ENCODE measurements at regions of chr5 and their contacts with region 1.

Region 1: DNA sequence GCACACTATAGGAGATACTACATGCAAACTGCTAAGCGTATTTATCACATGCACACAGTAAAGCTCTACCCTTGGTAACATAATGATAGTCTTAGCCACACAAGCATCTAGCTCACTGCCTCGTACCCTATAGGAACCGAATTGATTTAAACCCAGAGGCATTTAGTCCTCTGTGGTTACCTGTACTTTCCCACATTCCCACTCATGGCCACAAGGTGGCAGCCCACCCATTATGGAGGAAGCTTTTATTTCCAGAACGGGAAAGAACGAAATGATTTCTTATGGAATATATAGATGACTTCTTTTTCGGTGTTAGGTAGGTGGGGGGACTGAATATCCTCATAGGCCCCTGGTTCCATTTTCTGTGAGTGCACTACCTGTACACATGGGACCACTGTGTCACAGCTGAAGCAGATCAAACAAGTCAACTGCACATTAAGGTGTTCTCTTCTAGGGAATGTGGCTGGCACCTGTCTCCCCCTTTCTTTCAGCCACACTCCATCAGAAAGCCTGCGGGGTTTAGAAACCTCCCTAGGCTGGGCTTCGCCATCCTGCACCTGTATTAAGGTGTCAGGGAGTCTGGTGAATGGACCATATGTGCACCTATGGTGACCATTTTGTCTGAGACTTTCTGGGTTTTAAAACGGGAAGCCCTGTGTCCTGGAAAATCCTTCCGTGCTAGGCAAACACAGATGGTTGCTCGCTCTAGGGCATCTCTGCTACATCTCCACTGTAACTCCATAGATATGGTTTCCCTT is 313.2 kb downstream of the SLIT3 start:
- DNase-seq: peak; percentile 78 to 83
- H3K4me3 ChIP-seq: no peak overlapping the region
- H3K27ac ChIP-seq: no peak overlapping the region
- H3K4me1 ChIP-seq: peaks cover 8 to 22% of the 10 kb centered on the region in 2 donors
- H3K27me3 ChIP-seq: no peaks in the 10 kb centered on the region
- CTCF ChIP-seq: peak; percentile 82 to 95 (median 86)
- POLR2A ChIP-seq: no peak

Region 2: DNA sequence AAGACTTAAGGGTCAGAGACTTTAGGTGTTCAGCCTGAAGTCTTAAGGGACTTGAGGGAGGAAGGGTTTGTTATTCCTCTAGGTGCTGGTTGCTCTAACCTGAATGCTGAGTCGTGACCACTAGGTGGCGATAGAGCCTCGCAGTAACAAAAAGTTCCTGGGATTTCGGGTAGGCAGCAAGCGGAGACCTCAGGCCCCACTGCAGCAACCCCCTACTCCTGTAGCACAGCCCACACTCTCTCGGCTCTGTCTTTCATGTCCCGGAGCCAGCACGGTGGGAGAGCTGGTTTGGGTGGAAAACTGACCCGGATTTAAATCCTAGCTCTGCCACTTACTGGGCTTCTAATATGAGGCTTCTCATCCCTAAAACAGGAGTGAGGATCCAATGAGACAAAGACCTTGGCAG is 308.2 kb before region 1 on chr5:
- intact Hi-C with region 1: loop called (anchors 10 kb)
- DNase-seq: peak; percentile 77 to 81
- H3K4me3 ChIP-seq: no peak overlapping the region
- H3K27ac ChIP-seq: no peak overlapping the region
- H3K4me1 ChIP-seq: peaks cover 4 to 8% of the 10 kb centered on the region in 2 donors
- H3K27me3 ChIP-seq: no peaks in the 10 kb centered on the region
- CTCF ChIP-seq: peak; percentile 62 to 89 (median 81)
- POLR2A ChIP-seq: no peak

Region 3: DNA sequence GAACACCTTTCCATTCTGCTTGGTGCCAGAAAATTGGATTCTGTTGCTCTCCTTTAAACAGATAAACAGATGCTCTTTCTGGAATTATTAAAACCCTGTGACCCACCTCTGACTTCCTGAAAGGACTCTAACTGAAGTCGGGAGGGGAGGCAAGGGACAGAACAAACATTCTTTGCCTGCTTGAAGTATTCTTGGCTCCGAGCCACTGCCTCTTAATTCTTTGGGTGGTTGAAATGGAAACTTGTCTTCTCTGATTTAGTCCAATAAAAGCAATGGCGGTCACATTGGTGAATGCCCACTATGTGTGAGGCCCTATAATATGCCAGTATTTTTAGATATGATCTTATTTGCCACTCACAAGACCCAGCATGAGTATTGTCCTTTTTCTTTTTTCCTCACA is 76.4 kb after region 1 on chr5:
- intact Hi-C with region 1: no loop called
- DNase-seq: peak; percentile 91 to 93
- H3K4me3 ChIP-seq: no peak overlapping the region
- H3K27ac ChIP-seq: peak overlapping the region; percentile 60 to 84 (median 67)
- H3K4me1 ChIP-seq: peaks cover 43 to 44% of the 10 kb centered on the region in 2 donors
- H3K27me3 ChIP-seq: no peaks in the 10 kb centered on the region
- CTCF ChIP-seq: no peak
- POLR2A ChIP-seq: no peak

Region 4: GRCh38 chr5:169554251-169554650 is 566.5 kb after region 1 on chr5:
- intact Hi-C with region 1: loop called (anchors 10 kb)
- DNase-seq: no peak
- H3K4me3 ChIP-seq: no peak overlapping the region
- H3K27ac ChIP-seq: no peak overlapping the region
- H3K4me1 ChIP-seq: no peaks in the 10 kb centered on the region
- H3K27me3 ChIP-seq: no peaks in the 10 kb centered on the region
- CTCF ChIP-seq: no peak
- POLR2A ChIP-seq: no peak

Region 5: GRCh38 chr5:169577951-169578350 is 590.2 kb after region 1 on chr5:
- intact Hi-C with region 1: loop called (anchors 10 kb)
- DNase-seq: peak; percentile 39 to 40
- H3K4me3 ChIP-seq: no peak overlapping the region
- H3K27ac ChIP-seq: peak overlapping the region in 1 of 3 donors; percentile 2
- H3K4me1 ChIP-seq: peaks cover 12 to 22% of the 10 kb centered on the region in 2 donors
- H3K27me3 ChIP-seq: no peaks in the 10 kb centered on the region
- CTCF ChIP-seq: peak; percentile 11 to 73 (median 58)
- POLR2A ChIP-seq: no peak

Measured in thyroid gland (tissue), 4 donors.